ENCODE measurements at regions of chr1 and their contacts with region 1.

Region 1: GRCh38 chr1:63615768-63616420 is 22.7 kb downstream of the PGM1 start:
- DNase-seq: peak; percentile 58
- H3K4me3 ChIP-seq: no peak overlapping the region
- H3K27ac ChIP-seq: no peak overlapping the region
- H3K4me1 ChIP-seq: peaks cover 4% of the 10 kb centered on the region
- H3K27me3 ChIP-seq: no peaks in the 10 kb centered on the region
- CTCF ChIP-seq: peak; percentile 60 to 75

Region 2: GRCh38 chr1:63674238-63674864 is 58.5 kb after region 1 on chr1:
- CTCF ChIA-PET with region 1: no interaction called
- dilution Hi-C with region 1: no loop called
- in situ Hi-C with region 1: no loop called
- intact Hi-C with region 1: loop called (anchors 1 kb)
- DNase-seq: peak; percentile 85
- H3K4me3 ChIP-seq: no peak overlapping the region
- H3K27ac ChIP-seq: no peak overlapping the region
- H3K4me1 ChIP-seq: peaks cover 13% of the 10 kb centered on the region
- H3K27me3 ChIP-seq: no peaks in the 10 kb centered on the region
- CTCF ChIP-seq: peak; percentile 76 to 77

Region 3: DNA sequence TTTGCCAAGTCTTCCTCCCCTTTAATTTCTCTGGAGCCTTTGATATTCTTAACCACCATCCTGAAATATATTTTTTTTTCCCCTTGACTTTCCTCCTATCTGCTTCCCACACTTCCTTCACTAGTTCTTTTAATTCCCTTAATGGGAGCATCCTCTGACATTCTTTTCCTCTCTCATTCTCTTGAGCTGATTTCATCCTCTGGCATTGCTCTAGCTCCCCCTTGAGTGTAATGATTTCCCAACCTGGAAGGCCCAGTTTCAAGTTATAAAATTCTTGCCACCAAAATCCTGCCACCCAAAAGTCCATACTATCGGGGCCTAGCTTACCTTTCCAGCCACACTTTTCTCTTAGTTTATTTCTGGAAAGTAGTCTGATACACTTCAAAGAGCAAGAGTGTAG is 548.1 kb after region 1 on chr1:
- CTCF ChIA-PET with region 1: no interaction called
- dilution Hi-C with region 1: no loop called
- in situ Hi-C with region 1: no loop called
- intact Hi-C with region 1: loop called (anchors 2 kb)
- DNase-seq: peak; percentile 26
- H3K4me3 ChIP-seq: no peak overlapping the region
- H3K27ac ChIP-seq: no peak overlapping the region
- H3K4me1 ChIP-seq: no peaks in the 10 kb centered on the region
- H3K27me3 ChIP-seq: no peaks in the 10 kb centered on the region
- CTCF ChIP-seq: peak; percentile 24 to 61